HepG2 (cell line): ENCODE measurements at regions of chr1 and their contacts with region 1.

Region 1: GRCh38 chr1:197356723-197357533 is 88.9 kb downstream of the CRB1 start:
- DNase-seq: peak; percentile 32
- ATAC-seq: peak; percentile 86
- H3K4me3 ChIP-seq: no peak overlapping the region
- H3K27ac ChIP-seq: no peak overlapping the region
- H3K4me1 ChIP-seq: no peaks in the 10 kb centered on the region
- H3K27me3 ChIP-seq: no peaks in the 10 kb centered on the region
- CTCF ChIP-seq: peak; percentile 76
- EP300 ChIP-seq: no peak
- POLR2A ChIP-seq: no peak
- RAD21 ChIP-seq: peak; percentile 40; the same call in 1 of the 2 replicates

Region 2: GRCh38 chr1:197327776-197328364 is 29.1 kb before region 1 on chr1:
- CTCF ChIA-PET with region 1: interaction called, 7 read pairs
- POLR2A ChIA-PET with region 1: no interaction called
- in situ Hi-C with region 1: no loop called
- intact Hi-C with region 1: loop called (anchors 1 kb)
- DNase-seq: no peak
- ATAC-seq: no peak
- H3K4me3 ChIP-seq: no peak overlapping the region
- H3K27ac ChIP-seq: no peak overlapping the region
- H3K4me1 ChIP-seq: no peaks in the 10 kb centered on the region
- H3K27me3 ChIP-seq: no peaks in the 10 kb centered on the region
- CTCF ChIP-seq: peak; percentile 32
- EP300 ChIP-seq: no peak
- POLR2A ChIP-seq: no peak
- RAD21 ChIP-seq: no peak

Region 3: DNA sequence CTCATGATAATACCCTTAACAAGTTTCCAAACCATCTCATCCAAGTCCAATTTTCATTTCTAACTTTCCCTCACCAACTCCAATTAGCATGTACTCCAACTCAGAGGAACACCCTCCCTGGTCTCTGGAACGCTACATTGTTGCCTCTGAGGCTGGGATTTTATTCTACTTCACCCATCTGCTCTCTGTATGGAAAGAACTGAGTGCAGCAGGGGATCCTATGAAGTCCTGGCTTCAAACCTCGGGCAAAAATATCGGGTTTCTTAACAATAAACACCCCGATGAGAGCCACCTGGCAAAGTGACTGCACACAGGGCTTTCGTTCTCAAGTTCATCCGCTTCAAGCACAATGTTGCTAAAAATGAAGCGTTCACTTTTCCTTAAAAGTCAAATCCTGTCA is 10.7 kb after region 1 on chr1:
- CTCF ChIA-PET with region 1: no interaction called
- POLR2A ChIA-PET with region 1: no interaction called
- in situ Hi-C with region 1: no loop called
- intact Hi-C with region 1: no loop called
- DNase-seq: no peak
- ATAC-seq: no peak
- H3K4me3 ChIP-seq: no peak overlapping the region
- H3K27ac ChIP-seq: no peak overlapping the region
- H3K4me1 ChIP-seq: no peaks in the 10 kb centered on the region
- H3K27me3 ChIP-seq: no peaks in the 10 kb centered on the region
- CTCF ChIP-seq: no peak
- EP300 ChIP-seq: no peak
- POLR2A ChIP-seq: no peak
- RAD21 ChIP-seq: no peak